ENCODE measurements at regions of chr11 and their contacts with region 1.

Region 1: DNA sequence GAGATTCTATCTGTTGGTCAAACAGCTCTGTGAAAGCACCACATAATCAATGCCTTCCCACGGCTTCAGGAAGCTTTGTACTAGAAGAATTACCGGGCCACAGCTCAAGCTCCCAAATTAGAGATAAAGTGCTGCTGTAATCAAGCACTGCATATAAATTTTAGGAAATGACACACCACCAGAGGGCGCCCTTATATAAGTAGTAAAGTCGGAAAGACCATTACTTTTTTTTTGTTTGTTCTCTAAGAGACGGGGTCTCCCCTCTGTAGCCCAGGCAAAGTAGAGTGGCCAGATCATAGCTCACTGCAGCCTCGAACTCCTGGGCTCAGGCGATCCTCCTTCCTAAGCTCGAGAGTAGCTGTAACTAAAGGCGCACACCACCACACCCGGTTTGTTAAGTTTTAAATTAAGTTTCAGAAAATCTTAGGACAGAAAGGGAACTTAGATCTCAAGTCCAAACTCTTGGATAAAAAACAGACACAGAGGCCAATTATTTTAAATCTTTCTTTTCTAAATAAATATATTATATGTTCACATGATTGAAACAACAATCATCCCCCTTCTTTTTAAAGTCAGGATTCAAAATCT is 32.6 kb downstream of the PRCP start:
- DNase-seq: peak; percentile 47 to 78 (median 73)
- ATAC-seq: peak; percentile 84
- H3K4me3 ChIP-seq: no peak overlapping the region
- H3K4me3 Mint-ChIP-seq: peak overlapping the region in 8 of 10 donors; percentile 22 to 78 (median 60)
- H3K27ac ChIP-seq: no peak overlapping the region
- H3K27ac Mint-ChIP-seq: peak overlapping the region in 5 of 9 donors; percentile 4 to 67 (median 33)
- H3K4me1 ChIP-seq: peaks cover 0 to 4% of the 10 kb centered on the region in 2 donors
- H3K4me1 Mint-ChIP-seq: peaks cover 3 to 12% (median 11%) of the 10 kb centered on the region in 7 donors
- H3K27me3 ChIP-seq: no peaks in the 10 kb centered on the region
- H3K27me3 Mint-ChIP-seq: peaks cover 0 to 7% (median 0%) of the 10 kb centered on the region in 5 donors

Region 2: DNA sequence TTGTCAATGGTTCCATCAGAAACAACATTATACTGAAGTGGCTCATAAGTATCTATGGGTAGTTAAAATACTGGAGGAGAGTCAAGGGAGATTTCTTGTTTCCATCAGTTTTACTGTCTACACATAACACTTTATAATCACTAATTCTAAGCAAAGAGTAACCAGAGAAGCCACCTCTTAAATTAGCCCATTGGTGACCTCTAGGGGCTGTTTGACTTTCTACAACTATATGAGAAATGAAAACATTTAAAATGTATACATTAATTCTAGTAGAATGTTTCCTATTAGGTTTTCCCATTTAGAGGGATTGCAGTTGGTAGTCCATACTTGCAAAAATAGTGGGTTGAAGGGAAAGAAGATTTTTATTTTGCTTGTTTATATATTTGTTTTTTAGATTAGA is 638.2 kb before region 1 on chr11:
- CTCF ChIA-PET with region 1: no interaction called
- POLR2A ChIA-PET with region 1: no interaction called
- intact Hi-C with region 1: no loop called
- DNase-seq: peak in 5 of 9 donors; percentile 0 to 21 (median 7)
- ATAC-seq: no peak
- H3K4me3 ChIP-seq: no peak overlapping the region
- H3K4me3 Mint-ChIP-seq: no peak overlapping the region
- H3K27ac ChIP-seq: no peak overlapping the region
- H3K27ac Mint-ChIP-seq: no peak overlapping the region
- H3K4me1 ChIP-seq: no peaks in the 10 kb centered on the region
- H3K4me1 Mint-ChIP-seq: no peaks in the 10 kb centered on the region
- H3K27me3 ChIP-seq: peaks cover 0 to 2% of the 10 kb centered on the region in 2 donors
- H3K27me3 Mint-ChIP-seq: peaks cover 0 to 4% (median 0%) of the 10 kb centered on the region in 5 donors

Region 3: DNA sequence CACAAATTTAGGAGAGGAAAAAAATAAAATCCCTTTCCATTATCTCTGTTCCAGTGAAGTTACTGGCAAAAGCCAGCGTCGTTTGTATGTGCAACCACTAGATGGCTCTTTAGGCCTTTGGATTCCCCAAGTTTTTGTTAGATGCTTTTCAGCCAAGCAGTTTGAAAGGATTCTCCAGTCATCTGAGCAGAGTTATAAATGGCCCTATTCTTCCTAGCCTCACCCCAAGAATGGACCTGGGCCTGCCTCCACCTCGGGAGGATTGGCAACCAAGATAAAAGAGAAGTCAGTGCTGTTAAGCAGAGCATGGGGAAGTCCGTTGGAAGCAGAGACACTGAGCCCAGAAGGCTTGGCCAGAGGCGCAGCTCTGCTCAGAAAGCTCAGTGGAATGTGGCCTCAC is 149.3 kb before region 1 on chr11:
- CTCF ChIA-PET with region 1: interaction called, 24 read pairs
- POLR2A ChIA-PET with region 1: no interaction called
- intact Hi-C with region 1: loop called (anchors 1 kb)
- DNase-seq: peak in 5 of 9 donors; percentile 22 to 53 (median 34)
- ATAC-seq: peak; percentile 61
- H3K4me3 ChIP-seq: no peak overlapping the region
- H3K4me3 Mint-ChIP-seq: no peak overlapping the region
- H3K27ac ChIP-seq: no peak overlapping the region
- H3K27ac Mint-ChIP-seq: peak overlapping the region in 1 of 9 donors; percentile 87
- H3K4me1 ChIP-seq: no peaks in the 10 kb centered on the region
- H3K4me1 Mint-ChIP-seq: peaks cover 0 to 6% (median 4%) of the 10 kb centered on the region in 7 donors
- H3K27me3 ChIP-seq: no peaks in the 10 kb centered on the region
- H3K27me3 Mint-ChIP-seq: peaks cover 0 to 5% (median 0%) of the 10 kb centered on the region in 5 donors

Region 4: GRCh38 chr11:82775736-82776346 is 91.7 kb before region 1 on chr11:
- CTCF ChIA-PET with region 1: no interaction called
- POLR2A ChIA-PET with region 1: no interaction called
- intact Hi-C with region 1: loop called in 1 of 2 experiments (anchors 1 kb)
- DNase-seq: peak in 7 of 9 donors; percentile 6 to 34 (median 16)
- ATAC-seq: peak; percentile 82
- H3K4me3 ChIP-seq: no peak overlapping the region
- H3K4me3 Mint-ChIP-seq: no peak overlapping the region
- H3K27ac ChIP-seq: no peak overlapping the region
- H3K27ac Mint-ChIP-seq: no peak overlapping the region
- H3K4me1 ChIP-seq: no peaks in the 10 kb centered on the region
- H3K4me1 Mint-ChIP-seq: peaks cover 0 to 2% (median 0%) of the 10 kb centered on the region in 7 donors
- H3K27me3 ChIP-seq: no peaks in the 10 kb centered on the region
- H3K27me3 Mint-ChIP-seq: peaks cover 0 to 33% (median 0%) of the 10 kb centered on the region in 5 donors

Region 5: GRCh38 chr11:82823647-82824619 is 43.7 kb before region 1 on chr11:
- CTCF ChIA-PET with region 1: no interaction called
- POLR2A ChIA-PET with region 1: no interaction called
- intact Hi-C with region 1: no loop called
- DNase-seq: no peak
- ATAC-seq: no peak
- H3K4me3 ChIP-seq: no peak overlapping the region
- H3K4me3 Mint-ChIP-seq: no peak overlapping the region
- H3K27ac ChIP-seq: no peak overlapping the region
- H3K27ac Mint-ChIP-seq: no peak overlapping the region
- H3K4me1 ChIP-seq: no peaks in the 10 kb centered on the region
- H3K4me1 Mint-ChIP-seq: no peaks in the 10 kb centered on the region
- H3K27me3 ChIP-seq: no peaks in the 10 kb centered on the region
- H3K27me3 Mint-ChIP-seq: no peaks in the 10 kb centered on the region

Region 6: DNA sequence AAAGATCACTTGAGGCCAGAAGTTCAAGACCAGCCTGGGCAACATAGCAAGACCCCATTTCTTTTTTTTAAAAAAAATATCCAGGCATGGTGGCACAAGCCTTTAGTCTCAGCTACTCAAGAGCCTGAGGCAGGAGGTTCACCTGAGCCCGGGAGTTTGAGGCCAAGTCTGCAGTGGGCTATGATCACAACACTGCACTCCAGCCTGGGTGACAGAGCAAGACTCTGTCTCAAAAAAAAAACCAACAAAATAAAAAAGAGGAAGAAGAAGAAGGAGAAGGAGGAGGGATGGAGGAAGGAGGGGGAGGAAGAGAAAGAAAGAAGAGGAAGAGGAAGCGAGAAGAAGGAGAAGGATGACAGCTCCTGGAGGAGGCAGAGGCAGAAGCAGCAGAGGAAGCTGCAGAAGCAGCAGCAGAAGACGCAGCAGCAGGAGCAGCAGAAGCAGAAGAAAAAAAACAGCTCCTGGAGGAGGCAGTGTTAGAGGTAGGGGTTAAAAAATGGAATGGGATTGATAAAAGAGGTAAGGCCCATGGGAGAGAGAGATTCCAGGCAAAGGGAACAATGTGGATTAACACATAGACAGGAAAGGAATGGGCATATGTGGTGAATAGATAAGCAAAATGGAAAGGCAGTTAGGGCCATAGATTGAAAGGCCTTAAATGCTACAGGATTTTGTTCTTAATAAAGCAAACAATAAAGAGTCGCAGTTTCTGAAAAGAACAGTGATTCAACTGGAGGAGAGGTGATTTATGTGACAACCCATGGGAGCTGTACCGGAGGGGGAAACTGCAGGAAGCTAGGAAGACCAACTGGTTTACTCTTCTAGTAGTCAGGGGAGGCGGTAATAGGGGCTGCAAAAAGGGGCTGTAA is 21.8 kb after region 1 on chr11:
- CTCF ChIA-PET with region 1: interaction called, 11 read pairs
- POLR2A ChIA-PET with region 1: interaction called, 5 read pairs
- intact Hi-C with region 1: loop called in 1 of 2 experiments (anchors 2 kb)
- DNase-seq: no peak
- ATAC-seq: peak; percentile 34
- H3K4me3 ChIP-seq: no peak overlapping the region
- H3K4me3 Mint-ChIP-seq: no peak overlapping the region
- H3K27ac ChIP-seq: no peak overlapping the region
- H3K27ac Mint-ChIP-seq: no peak overlapping the region
- H3K4me1 ChIP-seq: no peaks in the 10 kb centered on the region
- H3K4me1 Mint-ChIP-seq: peaks cover 0 to 6% (median 0%) of the 10 kb centered on the region in 7 donors
- H3K27me3 ChIP-seq: no peaks in the 10 kb centered on the region
- H3K27me3 Mint-ChIP-seq: no peaks in the 10 kb centered on the region

Region 7: DNA sequence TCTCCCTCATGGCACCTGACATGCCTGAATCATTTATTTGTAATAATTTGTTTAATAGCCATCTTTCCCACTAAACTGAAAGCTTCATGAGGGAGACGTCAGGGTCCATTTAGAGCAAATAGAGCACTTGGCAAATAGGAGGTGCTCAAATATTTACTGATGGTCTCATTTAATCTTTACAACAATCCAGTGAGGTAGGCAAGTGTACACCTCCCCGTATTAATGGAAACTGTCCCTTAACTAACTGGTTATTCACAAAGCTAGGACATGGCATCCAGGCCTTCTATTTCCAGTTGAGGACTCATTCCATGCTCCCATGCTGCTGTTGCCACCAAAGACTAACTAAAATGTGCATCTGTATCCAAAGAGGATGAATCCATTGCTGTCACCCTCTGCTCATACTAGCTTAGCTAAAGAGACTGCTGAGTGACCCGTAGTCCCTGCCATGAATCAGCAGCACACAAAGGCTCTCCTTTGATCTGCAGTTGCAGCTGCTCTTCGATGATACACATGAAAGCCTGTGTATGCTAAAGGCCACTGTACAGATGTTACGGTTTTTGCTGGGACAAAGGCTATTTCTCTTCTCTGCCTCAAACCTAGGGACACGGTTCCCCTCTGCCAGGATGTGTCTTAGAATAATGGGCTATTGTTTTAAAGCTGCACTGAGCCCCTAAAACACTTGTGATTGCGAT is 121.5 kb after region 1 on chr11:
- CTCF ChIA-PET with region 1: interaction called, 8 read pairs
- POLR2A ChIA-PET with region 1: interaction called, 3 read pairs
- intact Hi-C with region 1: loop called in 1 of 2 experiments (anchors 1 kb)
- DNase-seq: no peak
- ATAC-seq: no peak
- H3K4me3 ChIP-seq: no peak overlapping the region
- H3K4me3 Mint-ChIP-seq: peak overlapping the region in 1 of 10 donors; percentile 13
- H3K27ac ChIP-seq: no peak overlapping the region
- H3K27ac Mint-ChIP-seq: peak overlapping the region in 4 of 9 donors; percentile 22 to 69 (median 32)
- H3K4me1 ChIP-seq: peaks cover 0 to 4% of the 10 kb centered on the region in 2 donors
- H3K4me1 Mint-ChIP-seq: peaks cover 1 to 24% (median 15%) of the 10 kb centered on the region in 7 donors
- H3K27me3 ChIP-seq: no peaks in the 10 kb centered on the region
- H3K27me3 Mint-ChIP-seq: no peaks in the 10 kb centered on the region

Region 8: GRCh38 chr11:83819933-83820549 is 952.5 kb after region 1 on chr11:
- CTCF ChIA-PET with region 1: interaction called, 9 read pairs
- POLR2A ChIA-PET with region 1: no interaction called
- intact Hi-C with region 1: loop called (anchors 1 kb)
- DNase-seq: peak in 5 of 9 donors; percentile 3 to 13 (median 10)
- ATAC-seq: no peak
- H3K4me3 ChIP-seq: no peak overlapping the region
- H3K4me3 Mint-ChIP-seq: no peak overlapping the region
- H3K27ac ChIP-seq: no peak overlapping the region
- H3K27ac Mint-ChIP-seq: no peak overlapping the region
- H3K4me1 ChIP-seq: no peaks in the 10 kb centered on the region
- H3K4me1 Mint-ChIP-seq: no peaks in the 10 kb centered on the region
- H3K27me3 ChIP-seq: no peaks in the 10 kb centered on the region
- H3K27me3 Mint-ChIP-seq: peaks cover 0 to 4% (median 3%) of the 10 kb centered on the region in 5 donors

Measured in naive thymus-derived CD4-positive, alpha-beta T cell (primary cell).